ENCODE measurements at regions of chr6 and their contacts with region 1.

Region 1: DNA sequence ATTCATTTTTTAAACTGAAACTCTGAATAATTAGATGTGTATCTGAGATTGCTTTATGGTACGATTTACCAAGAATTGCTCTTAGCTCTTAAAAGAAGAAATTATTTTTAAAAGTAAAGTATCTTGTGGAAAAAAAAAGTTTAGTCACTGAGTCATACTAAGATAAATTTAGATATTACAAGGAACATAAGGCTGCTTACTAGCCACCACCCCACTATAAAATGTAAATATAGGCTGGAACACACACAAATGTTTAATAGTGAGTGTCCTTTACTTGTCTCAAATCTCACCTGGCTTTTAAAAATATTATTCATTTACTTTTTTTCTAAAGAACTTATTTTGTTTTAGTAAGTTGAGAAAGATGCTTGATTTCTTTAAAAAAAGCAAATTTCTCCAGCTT is 17.6 kb downstream of the RFX6 start:
- DNase-seq: no peak

Region 2: DNA sequence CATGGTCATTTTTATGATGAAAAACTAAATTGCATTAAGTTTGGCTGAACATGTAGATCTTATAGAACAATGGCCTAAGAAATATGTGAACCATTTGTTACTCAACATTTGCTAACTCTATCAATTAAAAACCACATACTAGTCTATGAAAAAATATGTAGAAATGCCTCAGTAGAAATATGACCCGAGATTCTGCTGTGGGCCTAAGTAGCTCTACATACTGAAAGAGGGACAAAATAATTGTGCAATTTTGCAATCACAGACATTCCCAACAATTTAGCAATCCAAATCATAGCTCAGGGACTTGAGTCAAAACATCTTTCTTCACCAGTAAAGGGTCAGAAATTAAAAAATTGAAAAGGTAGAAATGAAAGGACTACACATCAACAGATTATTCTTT is 1453.0 kb before region 1 on chr6:
- intact Hi-C with region 1: no loop called
- DNase-seq: no peak

Region 3: DNA sequence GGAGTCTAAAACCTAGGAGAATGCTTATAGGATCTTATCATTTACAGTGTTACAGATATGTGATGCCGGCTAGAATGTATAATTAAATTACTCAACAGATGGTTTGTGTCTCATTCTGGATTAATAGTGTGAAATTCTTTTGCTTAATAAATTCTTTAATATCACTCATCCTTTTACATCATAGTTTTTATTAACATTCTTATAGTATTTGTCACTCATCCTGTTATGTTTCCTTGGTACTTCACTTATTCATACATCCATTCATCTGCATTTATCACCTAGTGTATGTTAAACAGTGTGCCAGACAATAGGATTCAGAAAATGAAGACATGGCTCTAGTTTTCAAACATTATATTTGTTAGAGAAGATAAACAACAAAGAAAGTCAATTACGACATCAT is 1302.6 kb before region 1 on chr6:
- intact Hi-C with region 1: loop called in 1 of 2 experiments (anchors 5 kb)
- DNase-seq: no peak

Region 4: GRCh38 chr6:117270055-117270842 is 375.6 kb after region 1 on chr6:
- intact Hi-C with region 1: no loop called
- DNase-seq: no peak